Activated CD4-positive, alpha-beta memory T cell treated with anti-CD3 and anti-CD28 coated beads for 36 hours (primary cell): ENCODE measurements at regions of chr15 and their contacts with region 1.

Region 1: DNA sequence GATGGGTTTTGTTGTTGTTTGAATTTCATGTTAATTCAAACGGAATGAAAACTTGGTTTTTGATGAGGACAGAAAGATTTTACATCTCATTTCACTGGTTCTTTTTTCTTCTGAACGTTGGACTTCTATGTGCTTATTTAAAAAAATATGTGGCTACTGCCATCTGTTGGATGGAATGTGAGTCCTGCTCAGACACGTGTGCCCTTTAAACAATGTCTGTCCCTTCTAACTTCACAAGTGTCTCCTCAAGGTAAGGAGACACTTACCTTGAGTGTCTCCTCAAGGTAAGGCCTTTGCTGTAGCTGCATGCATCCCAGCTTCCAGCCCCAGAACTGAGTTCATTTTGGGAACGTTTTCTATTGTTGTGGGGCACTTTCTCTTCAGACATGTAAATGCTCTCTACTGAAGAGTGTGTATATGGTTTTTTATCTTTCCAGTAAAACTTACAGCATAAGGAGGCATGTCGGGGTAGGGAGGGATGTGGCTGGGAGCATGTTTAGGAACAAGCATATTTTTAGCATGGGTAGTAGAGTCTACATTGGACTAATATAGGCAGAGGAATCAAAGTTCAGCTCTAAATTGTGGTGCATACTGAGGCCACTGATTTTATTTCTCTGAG is 63.1 kb upstream of the UBE3A start:
- DNase-seq: no peak
- H3K4me3 Mint-ChIP-seq: no peak overlapping the region
- H3K27ac Mint-ChIP-seq: no peak overlapping the region
- H3K4me1 Mint-ChIP-seq: no peaks in the 10 kb centered on the region
- H3K27me3 Mint-ChIP-seq: peaks cover 6% of the 10 kb centered on the region

Region 2: DNA sequence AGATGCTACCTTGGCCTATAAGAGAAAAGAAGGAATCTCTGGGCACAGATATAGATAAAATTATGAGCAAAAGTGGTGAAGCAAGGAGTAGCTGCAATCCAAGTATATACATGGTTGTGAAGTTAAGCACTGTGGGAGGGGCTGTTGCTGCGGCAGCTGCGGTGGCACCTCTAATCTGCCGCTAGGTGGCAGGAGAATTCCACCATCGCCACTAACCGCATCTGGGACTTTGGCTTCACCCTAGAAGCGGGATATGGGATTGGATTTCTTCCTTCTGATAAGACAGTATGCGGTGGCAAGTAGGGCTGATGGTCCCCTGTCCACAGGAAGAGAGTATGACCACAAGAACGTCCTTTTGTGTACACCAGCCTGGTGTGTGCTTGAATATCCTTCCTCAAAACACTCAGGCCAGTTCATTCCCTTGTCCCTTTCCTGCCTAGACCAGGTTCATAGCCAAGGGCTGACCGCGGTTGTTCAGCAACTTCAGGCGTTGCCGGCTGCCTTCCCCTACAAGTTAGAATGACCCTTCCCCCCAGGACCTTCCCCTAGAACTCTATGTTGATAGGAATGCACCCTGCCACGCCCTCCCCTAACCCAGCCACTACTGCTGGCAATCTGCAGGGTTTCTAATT is 1859.4 kb before region 1 on chr15:
- CTCF ChIA-PET with region 1: interaction called, 13 read pairs
- POLR2A ChIA-PET with region 1: no interaction called
- intact Hi-C with region 1: loop called (anchors 5 kb)
- DNase-seq: peak; percentile 58
- H3K4me3 Mint-ChIP-seq: no peak overlapping the region
- H3K27ac Mint-ChIP-seq: no peak overlapping the region
- H3K4me1 Mint-ChIP-seq: no peaks in the 10 kb centered on the region
- H3K27me3 Mint-ChIP-seq: peaks cover 3% of the 10 kb centered on the region

Region 3: DNA sequence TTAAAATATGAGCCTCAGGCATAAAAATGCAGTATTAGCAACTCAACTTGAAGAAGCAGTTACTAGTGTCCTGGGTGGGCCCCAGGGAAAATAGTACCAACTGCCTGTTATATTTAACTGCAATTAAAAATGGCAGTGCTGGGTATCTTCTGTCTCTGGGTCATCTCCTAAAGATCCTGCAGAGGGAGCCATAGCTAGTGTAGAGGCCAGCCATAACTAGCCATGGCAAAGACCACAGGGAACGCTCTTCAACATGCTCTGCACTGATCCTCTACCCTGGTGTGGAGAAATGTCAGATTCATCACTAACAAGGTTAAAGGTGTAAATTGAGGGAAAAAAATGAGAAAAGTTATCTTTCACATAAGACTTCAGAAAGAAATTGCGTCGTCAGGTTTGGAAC is 365.8 kb before region 1 on chr15:
- CTCF ChIA-PET with region 1: interaction called, 3 read pairs
- POLR2A ChIA-PET with region 1: no interaction called
- intact Hi-C with region 1: loop called (anchors 5 kb)
- DNase-seq: no peak
- H3K4me3 Mint-ChIP-seq: no peak overlapping the region
- H3K27ac Mint-ChIP-seq: no peak overlapping the region
- H3K4me1 Mint-ChIP-seq: no peaks in the 10 kb centered on the region
- H3K27me3 Mint-ChIP-seq: no peaks in the 10 kb centered on the region

Region 4: GRCh38 chr15:25368850-25369249 is 133.1 kb before region 1 on chr15:
- CTCF ChIA-PET with region 1: no interaction called
- POLR2A ChIA-PET with region 1: no interaction called
- intact Hi-C with region 1: no loop called
- DNase-seq: no peak
- H3K4me3 Mint-ChIP-seq: no peak overlapping the region
- H3K27ac Mint-ChIP-seq: no peak overlapping the region
- H3K4me1 Mint-ChIP-seq: peaks cover 30% of the 10 kb centered on the region
- H3K27me3 Mint-ChIP-seq: no peaks in the 10 kb centered on the region

Region 5: DNA sequence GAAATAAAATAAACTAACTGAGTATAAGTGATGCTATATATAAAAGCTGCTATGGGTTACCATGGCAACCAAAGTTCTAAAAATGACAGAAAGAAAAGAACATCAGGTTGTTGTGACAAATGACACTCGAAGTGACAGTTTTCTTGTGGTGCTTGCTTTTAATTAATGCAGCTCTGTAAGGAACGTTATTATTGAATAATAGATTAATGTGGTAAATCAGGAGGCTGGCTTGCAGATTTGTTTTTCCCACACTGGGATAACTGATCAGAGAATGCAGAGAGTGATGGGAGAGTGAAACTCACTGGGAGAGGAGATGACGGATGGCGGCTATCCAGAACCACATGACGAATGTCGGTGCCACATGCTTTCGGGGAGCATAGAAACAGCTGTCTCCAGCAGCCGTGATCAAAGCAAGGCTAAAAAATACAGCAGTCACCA is 568.2 kb after region 1 on chr15:
- CTCF ChIA-PET with region 1: no interaction called
- POLR2A ChIA-PET with region 1: no interaction called
- intact Hi-C with region 1: no loop called
- DNase-seq: no peak
- H3K4me3 Mint-ChIP-seq: no peak overlapping the region
- H3K27ac Mint-ChIP-seq: no peak overlapping the region
- H3K4me1 Mint-ChIP-seq: peaks cover 21% of the 10 kb centered on the region
- H3K27me3 Mint-ChIP-seq: peaks cover 6% of the 10 kb centered on the region